ENCODE measurements at regions of chr7 and their contacts with region 1.

Region 1: GRCh38 chr7:130114374-130115135 is 44.2 kb downstream of the KLHDC10 start:
- DNase-seq: no peak
- ATAC-seq: no peak
- H3K4me3 ChIP-seq: no peak overlapping the region
- H3K27ac ChIP-seq: no peak overlapping the region
- H3K4me1 ChIP-seq: no peaks in the 10 kb centered on the region
- H3K27me3 ChIP-seq: no peaks in the 10 kb centered on the region
- CTCF ChIP-seq: no peak
- POLR2A ChIP-seq: no peak
- RAD21 ChIP-seq: no peak

Region 2: GRCh38 chr7:129780257-129780973 is 334.1 kb before region 1 on chr7:
- CTCF ChIA-PET with region 1: no interaction called
- POLR2A ChIA-PET with region 1: no interaction called
- dilution Hi-C with region 1: no loop called
- in situ Hi-C with region 1: no loop called
- intact Hi-C with region 1: no loop called
- DNase-seq: no peak
- ATAC-seq: peak; percentile 15; the same call in 1 of the 2 replicates
- H3K4me3 ChIP-seq: no peak overlapping the region
- H3K27ac ChIP-seq: no peak overlapping the region
- H3K4me1 ChIP-seq: peaks cover 2% of the 10 kb centered on the region; the same call in 1 of the 2 replicates
- H3K27me3 ChIP-seq: peaks cover 97% of the 10 kb centered on the region
- CTCF ChIP-seq: no peak
- POLR2A ChIP-seq: no peak
- RAD21 ChIP-seq: no peak

Region 3: DNA sequence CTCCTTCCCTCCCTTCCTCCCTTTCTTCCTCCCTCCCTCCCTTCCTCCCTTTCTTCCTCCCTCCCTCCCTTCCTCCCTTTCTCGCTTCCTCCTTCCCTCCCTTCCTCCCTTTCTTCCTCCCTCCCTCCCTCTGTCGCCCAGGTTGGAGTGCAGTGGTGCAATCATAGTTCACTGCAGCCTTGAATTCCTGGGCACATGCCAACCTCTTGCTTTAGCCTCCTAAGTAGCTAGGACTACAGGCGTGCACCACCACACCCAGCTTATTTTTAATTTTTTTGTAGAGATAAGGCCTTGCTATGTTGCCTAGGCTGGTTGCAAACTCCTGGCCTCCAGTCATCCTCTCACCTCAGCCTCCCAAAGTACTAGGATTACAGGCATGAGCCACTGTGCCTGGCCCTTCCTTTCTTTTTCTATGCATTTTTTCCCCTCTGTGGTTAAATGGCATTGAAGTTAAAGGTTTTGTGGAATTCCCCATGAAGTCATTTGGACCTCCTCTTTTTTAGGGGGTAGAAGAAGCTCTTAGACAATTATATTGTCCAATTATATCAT is 34.6 kb before region 1 on chr7:
- CTCF ChIA-PET with region 1: no interaction called
- POLR2A ChIA-PET with region 1: no interaction called
- dilution Hi-C with region 1: no loop called
- in situ Hi-C with region 1: no loop called
- intact Hi-C with region 1: loop called (anchors 5 kb)
- DNase-seq: no peak
- ATAC-seq: no peak
- H3K4me3 ChIP-seq: no peak overlapping the region
- H3K27ac ChIP-seq: no peak overlapping the region
- H3K4me1 ChIP-seq: peaks cover 5% of the 10 kb centered on the region
- H3K27me3 ChIP-seq: no peaks in the 10 kb centered on the region
- CTCF ChIP-seq: no peak
- POLR2A ChIP-seq: no peak
- RAD21 ChIP-seq: no peak